ENCODE measurements at regions of chr6 and their contacts with region 1.

Region 1: GRCh38 chr6:95698271-95698670 is 120.9 kb downstream of the MANEA start:
- DNase-seq: no peak
- H3K4me3 ChIP-seq: no peak overlapping the region
- CTCF ChIP-seq: no peak
- POLR2A ChIP-seq: no peak

Region 2: DNA sequence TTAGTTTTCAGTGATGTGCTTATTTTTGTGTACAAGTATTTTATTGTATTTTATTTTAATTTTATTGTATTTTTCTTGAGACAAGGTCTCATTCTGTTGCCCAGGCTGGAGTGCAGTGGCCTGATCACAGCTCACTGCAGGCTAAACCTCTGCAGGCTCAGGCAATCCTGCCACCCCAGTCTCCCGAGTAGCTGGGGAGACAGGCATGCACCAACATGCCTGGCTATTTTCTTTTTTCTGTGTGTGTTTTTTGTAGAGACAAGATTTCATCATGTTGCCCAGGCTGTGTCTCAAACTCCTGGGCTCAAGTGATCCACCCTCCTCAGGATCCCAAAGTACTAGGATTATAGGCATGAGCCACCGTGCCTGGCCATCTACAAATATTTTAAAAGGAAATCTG is 25.4 kb after region 1 on chr6:
- intact Hi-C with region 1: loop called (anchors 1 kb)
- DNase-seq: no peak
- H3K4me3 ChIP-seq: no peak overlapping the region
- CTCF ChIP-seq: no peak
- POLR2A ChIP-seq: no peak

Region 3: GRCh38 chr6:96436393-96436792 is 738.1 kb after region 1 on chr6:
- intact Hi-C with region 1: no loop called
- DNase-seq: no peak
- H3K4me3 ChIP-seq: no peak overlapping the region
- CTCF ChIP-seq: no peak
- POLR2A ChIP-seq: no peak